Activated CD4-positive, alpha-beta T cell treated with anti-CD3 and anti-CD28 coated beads, Interleukin-2, amount 10 ng/mL, durations not matched to agents 24 days and 14 days (primary cell): ENCODE measurements at regions of chr9 and their contacts with region 1.

Region 1: DNA sequence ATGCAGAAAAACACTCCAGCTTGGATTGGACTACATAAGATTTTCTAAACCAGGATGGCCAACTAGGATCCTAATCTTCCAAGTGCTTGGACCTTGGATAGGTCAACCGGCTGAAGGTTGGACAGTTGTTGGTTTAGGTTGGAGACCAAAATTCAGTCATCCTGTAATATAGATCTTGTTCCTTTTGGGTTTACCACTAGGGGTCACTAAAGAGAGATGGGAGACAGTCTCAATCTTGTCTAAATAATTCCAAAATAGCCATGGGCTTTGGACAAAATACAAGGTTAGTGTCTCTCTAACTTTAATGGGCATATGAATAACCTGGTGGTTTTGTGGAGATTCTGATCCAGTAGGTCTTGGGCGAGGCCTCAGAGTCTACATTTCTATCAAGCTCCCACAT is 148.7 kb upstream of the ERCC6L2 start:
- DNase-seq: no peak
- H3K4me3 Mint-ChIP-seq: no peak overlapping the region
- H3K27ac Mint-ChIP-seq: no peak overlapping the region
- H3K4me1 Mint-ChIP-seq: peaks cover 31% of the 10 kb centered on the region
- H3K27me3 Mint-ChIP-seq: peaks cover 15% of the 10 kb centered on the region

Region 2: DNA sequence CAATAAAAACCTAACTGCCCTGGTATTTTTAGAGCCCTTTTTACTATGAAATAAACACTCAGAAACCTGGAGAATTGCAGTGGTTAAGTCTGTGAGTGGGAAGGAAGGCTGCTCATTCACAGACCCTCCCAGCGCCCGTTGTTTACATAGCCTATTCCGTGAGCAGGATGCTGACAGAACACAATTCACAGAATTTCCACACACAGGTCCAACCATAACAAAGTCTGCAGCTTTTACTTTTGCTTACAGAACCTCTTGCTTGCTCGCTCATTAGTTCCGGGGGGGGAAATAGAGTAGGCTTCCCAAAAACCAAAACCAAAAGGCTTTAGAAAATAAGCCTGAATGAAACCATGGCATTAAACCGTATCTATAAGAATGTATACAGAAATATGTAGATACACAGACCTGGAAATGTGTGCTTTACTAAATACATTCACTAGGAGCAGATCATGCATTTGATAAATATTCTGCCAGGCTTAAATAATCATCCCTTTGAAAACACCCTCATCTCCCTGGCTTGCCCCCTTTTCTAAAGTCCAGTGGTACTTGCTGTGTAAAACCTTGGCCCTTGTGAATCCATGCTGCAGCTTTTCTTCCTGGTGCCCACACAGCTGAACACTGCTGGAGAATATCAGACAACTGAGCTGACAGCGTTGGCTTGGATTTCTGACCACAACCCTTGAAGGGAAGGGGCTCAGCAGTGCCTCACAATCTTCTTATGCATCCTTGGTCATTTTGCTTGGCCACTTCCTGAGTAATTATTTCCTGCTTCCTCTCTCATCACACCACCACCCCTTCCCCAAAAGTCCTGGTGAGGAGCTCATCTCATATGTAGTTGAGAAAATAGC is 537.3 kb before region 1 on chr9:
- intact Hi-C with region 1: loop called (anchors 5 kb)
- DNase-seq: peak; percentile 88
- H3K4me3 Mint-ChIP-seq: peak overlapping the region; percentile 65
- H3K27ac Mint-ChIP-seq: peak overlapping the region; percentile 79
- H3K4me1 Mint-ChIP-seq: peaks cover 36% of the 10 kb centered on the region
- H3K27me3 Mint-ChIP-seq: no peaks in the 10 kb centered on the region

Region 3: DNA sequence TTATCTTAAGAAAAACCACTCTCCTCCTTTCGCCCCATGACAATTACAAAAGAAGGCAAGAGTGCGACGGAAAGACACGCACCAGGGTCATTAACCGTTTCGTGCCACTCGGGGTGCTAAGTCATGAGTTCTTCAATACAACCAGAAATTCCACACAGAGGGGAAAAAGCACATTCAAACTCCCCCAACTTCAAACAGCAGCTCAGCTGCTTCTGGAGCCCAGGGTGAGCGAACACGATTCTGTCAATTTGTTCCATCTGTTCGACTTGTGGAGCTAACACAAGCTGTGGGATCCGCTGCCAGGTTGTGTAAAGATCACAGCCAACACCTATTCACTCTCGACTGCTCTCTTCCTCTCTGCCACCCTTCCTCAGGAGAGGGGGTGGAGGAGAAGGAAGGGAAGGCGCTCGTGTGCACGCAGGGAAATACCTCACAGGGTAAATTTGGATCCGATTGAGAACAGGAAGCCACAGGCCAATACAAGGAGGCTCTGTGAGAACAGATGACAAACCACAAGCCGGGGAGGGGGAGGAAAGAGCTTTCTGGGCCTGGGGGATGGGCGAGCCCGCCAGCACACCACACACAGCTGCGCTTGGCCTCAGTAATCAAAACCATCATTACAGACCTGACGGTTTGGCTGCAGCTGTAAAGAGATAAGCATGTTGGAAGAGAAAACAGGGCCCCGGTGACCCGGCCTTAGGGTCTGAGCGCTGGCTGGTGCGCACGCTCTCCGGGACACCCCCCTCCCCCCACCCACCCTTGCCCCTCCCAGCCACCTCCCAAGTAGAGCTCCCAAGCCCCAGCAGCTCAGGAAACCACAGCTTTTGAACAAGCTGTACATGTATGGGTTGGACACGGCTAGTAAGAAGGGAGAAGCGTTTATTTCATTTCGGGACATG is 264.3 kb before region 1 on chr9:
- intact Hi-C with region 1: loop called (anchors 1 kb)
- DNase-seq: peak; percentile 94
- H3K4me3 Mint-ChIP-seq: peak overlapping the region; percentile 78
- H3K27ac Mint-ChIP-seq: peak overlapping the region; percentile 70
- H3K4me1 Mint-ChIP-seq: peaks cover 23% of the 10 kb centered on the region
- H3K27me3 Mint-ChIP-seq: peaks cover 66% of the 10 kb centered on the region

Region 4: DNA sequence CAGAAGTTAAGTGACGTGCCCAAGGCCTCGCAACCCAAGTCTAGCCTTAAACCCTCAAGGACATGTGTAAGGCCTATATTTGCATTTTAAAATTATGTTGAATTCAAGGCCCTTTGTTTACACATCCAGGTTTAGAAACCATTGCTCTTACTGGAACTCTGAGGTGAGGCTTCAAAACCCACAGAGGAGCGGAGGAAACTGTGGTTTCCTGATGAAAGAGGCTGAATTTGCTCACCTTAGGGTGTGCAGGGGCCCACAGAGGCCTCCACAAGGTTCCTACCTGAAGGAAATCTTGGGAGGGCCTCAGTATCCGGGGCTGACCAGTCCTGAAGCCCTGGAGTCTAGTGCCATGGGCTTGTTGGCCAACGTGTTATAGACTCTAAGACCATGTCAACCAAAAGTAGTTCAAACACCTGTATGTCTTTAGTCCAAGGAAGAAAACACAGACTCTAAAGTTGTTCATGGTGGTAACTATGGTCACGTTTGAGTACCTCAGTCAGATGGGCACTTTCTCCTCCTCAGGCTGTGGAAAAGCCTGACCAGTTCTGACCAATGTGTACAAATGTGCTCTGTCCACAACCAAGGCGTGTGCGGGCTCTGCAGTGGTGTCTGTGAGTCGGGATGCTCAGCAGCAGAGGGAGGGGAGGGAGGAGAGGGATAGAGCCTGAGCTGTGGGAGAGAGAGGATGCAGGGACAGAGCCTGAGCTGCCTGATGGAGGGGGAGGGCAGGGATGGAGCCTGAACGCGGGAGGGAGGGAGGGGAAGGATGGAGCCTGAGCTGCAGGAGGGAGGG is 24.2 kb after region 1 on chr9:
- intact Hi-C with region 1: loop called (anchors 1 kb)
- DNase-seq: peak; percentile 86
- H3K4me3 Mint-ChIP-seq: peak overlapping the region; percentile 40
- H3K27ac Mint-ChIP-seq: no peak overlapping the region
- H3K4me1 Mint-ChIP-seq: peaks cover 13% of the 10 kb centered on the region
- H3K27me3 Mint-ChIP-seq: peaks cover 46% of the 10 kb centered on the region

Region 5: GRCh38 chr9:95852059-95853032 is 125.6 kb after region 1 on chr9:
- intact Hi-C with region 1: loop called (anchors 1 kb)
- DNase-seq: peak; percentile 69
- H3K4me3 Mint-ChIP-seq: peak overlapping the region; percentile 56
- H3K27ac Mint-ChIP-seq: peak overlapping the region; percentile 69
- H3K4me1 Mint-ChIP-seq: peaks cover 21% of the 10 kb centered on the region
- H3K27me3 Mint-ChIP-seq: no peaks in the 10 kb centered on the region

Region 6: DNA sequence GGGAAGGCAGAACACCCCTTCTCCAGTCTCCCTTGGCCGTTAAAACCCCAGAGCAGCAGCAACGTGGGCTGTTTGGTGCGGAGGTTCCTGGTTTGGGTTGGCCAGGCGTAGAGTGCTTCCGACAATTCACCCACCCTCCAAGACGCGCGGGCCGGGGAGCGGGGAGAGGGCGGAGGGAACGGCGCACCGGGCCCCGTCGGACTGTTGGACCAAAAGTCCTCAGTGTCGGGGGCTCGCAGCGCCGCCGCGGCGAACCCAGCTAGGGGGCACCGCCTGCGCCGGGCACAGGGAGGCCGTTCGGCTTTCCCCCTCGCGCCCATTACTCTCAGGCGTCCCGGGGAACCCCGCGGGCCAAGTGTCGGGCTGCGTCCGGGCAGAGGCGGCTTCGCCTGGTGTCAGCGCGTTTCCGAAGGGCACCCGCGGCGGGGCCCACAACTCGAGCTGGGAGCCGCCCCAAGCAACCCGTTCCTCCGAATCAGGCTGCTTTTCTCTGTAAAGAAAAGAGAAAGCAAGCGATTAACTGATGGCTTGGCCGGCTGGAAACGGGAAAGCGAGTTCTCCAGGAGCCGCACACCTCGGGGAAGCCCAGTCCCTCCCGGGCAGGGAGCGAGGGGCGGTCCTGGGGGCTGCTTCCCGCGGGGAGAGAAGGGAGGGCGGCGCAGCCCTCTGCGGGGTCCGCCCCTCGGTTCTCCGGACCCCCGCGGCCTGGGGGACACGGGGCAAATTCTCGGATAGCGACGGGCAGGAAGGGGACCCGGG is 294.2 kb after region 1 on chr9:
- intact Hi-C with region 1: loop called (anchors 1 kb)
- DNase-seq: peak; percentile 91
- H3K4me3 Mint-ChIP-seq: peak overlapping the region; percentile 84
- H3K27ac Mint-ChIP-seq: peak overlapping the region; percentile 96
- H3K4me1 Mint-ChIP-seq: peaks cover 72% of the 10 kb centered on the region
- H3K27me3 Mint-ChIP-seq: peaks cover 12% of the 10 kb centered on the region

Region 7: DNA sequence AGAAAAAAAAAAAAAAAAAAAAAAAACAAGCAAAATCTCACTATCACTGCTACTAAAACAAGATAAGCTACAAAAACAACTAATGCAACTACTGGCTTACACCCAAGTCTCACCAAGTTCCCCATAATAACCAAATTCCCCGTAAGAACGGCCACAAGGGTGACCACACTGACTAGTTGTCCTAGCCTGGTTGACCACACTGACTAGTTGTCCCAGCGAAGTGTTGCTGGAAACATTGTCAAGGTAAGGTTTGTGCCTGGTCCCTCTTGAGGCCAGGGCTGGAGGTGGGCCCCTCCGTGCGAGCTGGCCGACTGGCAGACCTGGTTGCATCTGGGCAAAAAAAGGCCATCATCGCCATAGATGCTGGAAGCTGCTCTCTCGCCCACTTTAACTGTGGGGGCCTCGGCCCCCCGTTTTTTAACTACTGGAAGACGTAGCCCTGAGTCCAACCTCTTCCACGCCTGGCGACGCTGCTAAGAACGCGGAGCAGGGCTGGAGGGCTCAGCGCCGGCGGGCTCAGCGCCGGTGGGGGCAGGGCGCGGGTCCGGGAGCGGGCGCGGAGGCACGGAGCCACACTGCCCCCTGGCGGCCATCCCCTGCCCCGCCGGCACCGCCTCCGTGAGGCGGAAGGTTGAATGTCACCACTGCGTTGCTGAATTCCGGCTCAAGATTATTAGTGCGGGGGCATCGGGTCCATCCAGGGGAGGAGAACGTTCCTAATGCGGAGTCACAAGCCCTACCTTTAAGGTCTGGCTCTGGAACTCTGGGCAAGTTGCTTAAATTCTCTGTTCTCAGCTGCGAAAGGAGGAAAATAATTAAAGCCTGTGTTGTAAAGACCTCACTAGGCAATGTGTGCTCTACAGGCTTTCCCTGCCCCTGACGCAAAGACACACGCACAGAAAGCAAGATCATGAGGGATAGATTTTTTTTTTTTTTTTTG is 491.3 kb after region 1 on chr9:
- intact Hi-C with region 1: loop called (anchors 2 kb)
- DNase-seq: peak; percentile 94
- H3K4me3 Mint-ChIP-seq: peak overlapping the region; percentile 83
- H3K27ac Mint-ChIP-seq: peak overlapping the region; percentile 53
- H3K4me1 Mint-ChIP-seq: peaks cover 8% of the 10 kb centered on the region
- H3K27me3 Mint-ChIP-seq: peaks cover 51% of the 10 kb centered on the region